BJ (cell line): ENCODE measurements at regions of chr15 and their contacts with region 1.

Region 1: GRCh38 chr15:71730277-71731144 is 79.8 kb upstream of the NR2E3 start:
- DNase-seq: no peak
- H3K4me3 ChIP-seq: no peak overlapping the region
- H3K27me3 ChIP-seq: no peaks in the 10 kb centered on the region
- CTCF ChIP-seq: peak; percentile 82

Region 2: DNA sequence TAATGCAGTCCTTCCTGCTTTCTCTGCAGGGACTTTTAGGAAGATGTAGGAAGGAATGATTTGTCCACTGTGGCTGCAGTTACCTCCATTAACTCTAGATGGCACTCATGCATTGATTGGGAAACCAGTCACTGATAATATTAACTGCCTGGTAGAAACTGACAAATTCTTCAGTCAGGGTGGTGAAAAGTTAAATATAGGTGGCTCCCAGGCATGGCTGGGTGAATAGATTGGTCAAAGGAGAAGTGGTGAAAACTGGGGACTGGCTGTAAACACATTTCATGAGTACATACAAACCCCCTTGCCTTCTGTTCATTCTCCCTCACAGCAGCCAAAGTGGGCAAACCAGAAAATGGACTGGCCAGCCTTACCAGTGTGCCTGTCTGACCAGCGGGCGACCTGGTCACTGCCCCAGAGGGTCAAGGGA is 281.8 kb before region 1 on chr15:
- CTCF ChIA-PET with region 1: interaction called, 12 read pairs
- POLR2A ChIA-PET with region 1: no interaction called
- DNase-seq: no peak
- H3K4me3 ChIP-seq: no peak overlapping the region
- H3K27me3 ChIP-seq: no peaks in the 10 kb centered on the region
- CTCF ChIP-seq: peak; percentile 86

Region 3: DNA sequence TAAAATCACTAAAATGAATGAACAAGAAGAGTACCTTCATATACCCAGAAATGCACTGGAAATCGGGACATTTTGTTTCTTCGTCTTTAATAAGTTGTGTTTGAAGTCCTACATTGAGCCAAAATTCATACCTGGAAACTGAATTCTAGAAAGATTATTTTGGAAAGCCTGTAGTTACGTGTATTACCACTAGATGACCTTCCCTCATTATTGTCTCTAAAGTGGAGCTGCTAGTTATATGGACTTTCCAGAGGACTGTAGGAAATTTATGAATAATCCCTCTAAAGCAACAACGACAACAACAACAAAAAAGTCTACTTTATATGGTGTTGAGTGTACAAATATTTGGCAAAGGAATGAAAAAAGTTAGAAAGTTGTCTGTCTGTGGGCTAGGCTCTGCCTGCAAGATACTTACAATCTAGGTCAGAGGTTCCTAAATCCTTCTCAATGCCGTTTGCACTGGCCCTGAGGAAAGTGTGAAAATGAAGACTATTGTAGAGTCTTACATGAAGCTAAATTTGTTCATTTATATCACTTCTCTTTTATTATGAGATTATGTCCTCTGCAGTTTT is 155.0 kb before region 1 on chr15:
- CTCF ChIA-PET with region 1: interaction called, 60 read pairs
- POLR2A ChIA-PET with region 1: no interaction called
- DNase-seq: no peak
- H3K4me3 ChIP-seq: no peak overlapping the region
- H3K27me3 ChIP-seq: no peaks in the 10 kb centered on the region
- CTCF ChIP-seq: peak; percentile 62